ENCODE measurements at regions of chr1 and their contacts with region 1.

Region 1: DNA sequence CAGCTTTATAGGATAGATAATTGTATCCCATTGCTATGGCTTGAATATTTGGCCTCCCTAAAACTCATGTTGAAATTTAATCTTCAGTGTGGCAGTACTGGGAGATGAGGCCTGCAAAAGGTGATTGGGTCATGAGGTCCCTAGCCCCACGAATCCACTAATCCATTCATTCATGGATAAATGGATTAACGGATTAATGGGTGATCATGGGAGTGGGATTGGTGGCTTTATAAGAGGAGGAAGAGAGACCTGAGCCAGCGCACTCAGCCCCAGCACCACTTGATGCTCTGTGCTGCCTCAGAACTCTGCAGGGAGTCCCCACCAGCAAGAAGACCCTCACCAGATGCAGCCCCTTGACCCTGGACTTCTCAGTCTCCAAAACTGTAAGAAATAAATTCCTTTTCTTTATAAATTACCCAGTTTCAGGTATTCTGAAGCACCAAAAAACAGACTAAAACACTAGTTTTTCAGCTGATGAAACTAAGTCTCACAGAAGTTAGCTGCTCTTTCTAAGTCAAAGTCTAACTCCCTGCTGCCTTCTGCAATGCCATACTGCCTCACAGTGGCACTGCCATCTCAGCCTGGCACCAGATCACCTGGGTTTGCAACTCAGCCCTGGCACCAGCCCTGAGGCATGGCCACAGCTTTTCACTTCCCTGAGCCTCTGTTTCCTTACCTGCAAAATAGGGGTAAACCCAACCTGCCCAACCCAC is 31.9 kb downstream of the S100A6 start:
- DNase-seq: no peak
- H3K4me3 ChIP-seq: no peak overlapping the region
- H3K27ac ChIP-seq: no peak overlapping the region
- H3K4me1 ChIP-seq: peaks cover 30% of the 10 kb centered on the region
- H3K27me3 ChIP-seq: no peaks in the 10 kb centered on the region
- CTCF ChIP-seq: no peak

Region 2: GRCh38 chr1:153415850-153416570 is 87.9 kb before region 1 on chr1 and contains the start of gene S100A7A:
- CTCF ChIA-PET with region 1: no interaction called
- dilution Hi-C with region 1: loop called (anchors 5 kb)
- in situ Hi-C with region 1: no loop called
- intact Hi-C with region 1: no loop called
- DNase-seq: no peak
- H3K4me3 ChIP-seq: no peak within 1 kb of the TSS
- H3K27ac ChIP-seq: no peak within 1 kb of the TSS
- H3K4me1 ChIP-seq: no peaks in the 10 kb centered on the region
- H3K27me3 ChIP-seq: peaks cover 2% of the 10 kb centered on the region
- CTCF ChIP-seq: no peak
- total RNA-seq, gene S100A7A: not detected

Region 3: DNA sequence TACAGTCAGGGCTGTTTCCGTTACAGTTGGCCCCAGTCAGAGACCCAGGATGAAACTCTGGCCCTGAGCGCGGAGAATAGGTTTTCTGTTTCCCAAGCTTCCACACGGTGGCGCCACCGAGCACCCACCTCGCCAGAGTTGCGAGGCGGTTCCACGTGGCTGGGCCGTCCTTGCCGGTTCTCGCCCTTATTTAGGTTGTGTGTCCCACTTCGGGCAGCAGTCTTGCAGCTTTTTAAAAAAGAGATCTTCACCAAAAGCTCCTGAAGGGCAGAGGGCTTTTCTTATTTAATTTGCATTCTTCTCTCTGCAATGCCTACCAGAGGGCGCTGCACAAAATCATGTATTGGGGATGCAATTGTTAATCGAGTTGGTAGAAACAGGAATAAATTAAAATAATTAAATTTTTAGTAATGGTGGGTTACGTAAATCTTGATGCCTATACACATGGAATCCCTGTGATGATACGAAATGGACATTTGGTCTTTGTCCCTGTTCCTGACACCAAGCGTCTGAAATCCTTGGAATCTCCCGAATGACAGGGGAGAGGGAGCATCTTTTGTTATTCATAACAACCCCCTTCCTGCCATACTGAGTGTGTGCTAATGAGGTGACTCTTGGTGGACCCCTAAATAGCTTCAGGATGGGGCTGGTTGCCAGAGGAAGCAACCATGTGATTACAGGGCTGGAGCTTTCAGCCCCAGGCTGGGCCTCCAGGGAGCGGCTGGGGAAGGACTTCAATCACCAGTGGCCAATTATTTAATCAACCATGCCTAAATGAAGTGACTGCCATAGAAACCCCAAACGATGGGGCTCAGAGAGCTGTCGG is 37.9 kb before region 1 on chr1:
- CTCF ChIA-PET with region 1: no interaction called
- dilution Hi-C with region 1: loop called (anchors 5 kb)
- in situ Hi-C with region 1: no loop called
- intact Hi-C with region 1: no loop called
- DNase-seq: peak; percentile 39
- H3K4me3 ChIP-seq: no peak overlapping the region
- H3K27ac ChIP-seq: no peak overlapping the region
- H3K4me1 ChIP-seq: peaks cover 13% of the 10 kb centered on the region
- H3K27me3 ChIP-seq: peaks cover 3% of the 10 kb centered on the region
- CTCF ChIP-seq: peak; percentile 76 to 78

Region 4: GRCh38 chr1:153566440-153567379 is 62.8 kb after region 1 on chr1:
- CTCF ChIA-PET with region 1: interaction called, 8 read pairs
- dilution Hi-C with region 1: loop called (anchors 5 kb)
- in situ Hi-C with region 1: no loop called
- intact Hi-C with region 1: no loop called
- DNase-seq: peak; percentile 99
- H3K4me3 ChIP-seq: peak overlapping the region in 2 of 3 experiments; percentile 61 to 98
- H3K27ac ChIP-seq: peak overlapping the region; percentile 100
- H3K4me1 ChIP-seq: peaks cover 40% of the 10 kb centered on the region
- H3K27me3 ChIP-seq: no peaks in the 10 kb centered on the region
- CTCF ChIP-seq: no peak

Region 5: DNA sequence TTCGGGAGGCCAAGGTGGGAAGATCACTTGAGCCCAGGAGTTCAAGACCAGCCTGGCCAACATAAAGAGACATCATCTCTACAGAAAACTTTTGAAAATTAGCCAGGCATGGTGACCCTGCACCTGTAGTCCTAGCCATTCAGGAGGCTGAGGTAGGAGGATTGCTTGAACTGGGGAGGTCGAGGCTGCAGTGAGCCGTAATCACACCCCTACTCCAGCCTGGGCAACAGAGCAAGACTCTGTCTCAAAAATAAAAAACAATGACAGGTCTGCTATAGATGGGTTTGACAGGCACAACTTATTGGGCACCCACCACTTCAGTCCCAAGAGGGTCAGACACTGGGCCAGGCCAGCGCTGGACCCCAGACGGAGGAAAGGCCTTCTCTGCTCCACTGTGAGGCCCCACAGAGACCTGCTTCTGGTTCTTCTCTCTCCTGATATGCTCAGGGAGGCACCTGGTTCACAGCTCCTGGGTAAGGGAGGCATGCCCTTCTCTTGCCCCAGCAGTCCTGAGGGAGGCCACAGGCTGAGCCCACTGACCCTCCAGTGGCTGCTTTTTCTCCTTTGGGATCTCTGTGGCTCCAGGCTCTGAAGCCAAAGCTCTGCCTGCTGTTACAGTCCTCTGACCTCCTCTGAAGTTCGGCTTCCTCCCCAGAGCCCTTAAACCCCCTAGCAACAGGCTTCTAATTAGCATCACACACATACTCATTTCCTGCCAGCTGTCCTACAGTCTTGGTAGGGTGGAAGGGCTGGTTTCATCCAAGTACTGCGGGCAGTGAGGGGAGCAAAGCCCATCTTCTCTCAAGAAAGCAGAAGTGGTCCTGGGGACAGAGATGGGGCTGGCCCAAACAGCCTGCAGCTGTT is 94.6 kb after region 1 on chr1:
- CTCF ChIA-PET with region 1: no interaction called
- dilution Hi-C with region 1: no loop called
- in situ Hi-C with region 1: no loop called
- intact Hi-C with region 1: no loop called
- DNase-seq: peak; percentile 29
- H3K4me3 ChIP-seq: no peak overlapping the region
- H3K27ac ChIP-seq: no peak overlapping the region
- H3K4me1 ChIP-seq: no peaks in the 10 kb centered on the region
- H3K27me3 ChIP-seq: no peaks in the 10 kb centered on the region
- CTCF ChIP-seq: no peak

Measured in mammary epithelial cell (primary cell).